ENCODE measurements at regions of chr19 and their contacts with region 1.

Region 1: GRCh38 chr19:31054430-31054829 is 294.8 kb downstream of the TSHZ3 start:
- DNase-seq: peak; percentile 62 to 70
- H3K4me3 ChIP-seq: no peak overlapping the region
- H3K27ac ChIP-seq: no peak overlapping the region
- H3K4me1 ChIP-seq: no peaks in the 10 kb centered on the region; a peak in 2 of 7 replicates
- H3K27me3 ChIP-seq: no peaks in the 10 kb centered on the region
- CTCF ChIP-seq: peak; percentile 84 to 98 (median 98)
- EP300 ChIP-seq: no peak
- POLR2A ChIP-seq: no peak
- RAD21 ChIP-seq: peak; percentile 98

Region 2: GRCh38 chr19:30682999-30683536 is 371.4 kb before region 1 on chr19:
- CTCF ChIA-PET with region 1: interaction called, 13 read pairs
- POLR2A ChIA-PET with region 1: no interaction called
- DNase-seq: peak in 1 of 2 experiments; percentile 82
- H3K4me3 ChIP-seq: no peak overlapping the region
- H3K27ac ChIP-seq: no peak overlapping the region
- H3K4me1 ChIP-seq: peaks cover 0 to 3% (median 0%) of the 10 kb centered on the region in 4 experiments; a peak in 2 of 7 replicates
- H3K27me3 ChIP-seq: no peaks in the 10 kb centered on the region
- CTCF ChIP-seq: peak; percentile 79 to 88 (median 86)
- EP300 ChIP-seq: no peak
- POLR2A ChIP-seq: no peak
- RAD21 ChIP-seq: peak; percentile 92 to 94

Region 3: GRCh38 chr19:31071136-31071855 is 16.9 kb after region 1 on chr19:
- CTCF ChIA-PET with region 1: interaction called, 14 read pairs
- POLR2A ChIA-PET with region 1: no interaction called
- DNase-seq: no peak
- H3K4me3 ChIP-seq: no peak overlapping the region
- H3K27ac ChIP-seq: no peak overlapping the region
- H3K4me1 ChIP-seq: peaks cover 3 to 15% (median 7%) of the 10 kb centered on the region in 4 experiments; a peak in 4 of 7 replicates
- H3K27me3 ChIP-seq: no peaks in the 10 kb centered on the region
- CTCF ChIP-seq: no peak
- EP300 ChIP-seq: no peak
- POLR2A ChIP-seq: no peak
- RAD21 ChIP-seq: no peak

Region 4: DNA sequence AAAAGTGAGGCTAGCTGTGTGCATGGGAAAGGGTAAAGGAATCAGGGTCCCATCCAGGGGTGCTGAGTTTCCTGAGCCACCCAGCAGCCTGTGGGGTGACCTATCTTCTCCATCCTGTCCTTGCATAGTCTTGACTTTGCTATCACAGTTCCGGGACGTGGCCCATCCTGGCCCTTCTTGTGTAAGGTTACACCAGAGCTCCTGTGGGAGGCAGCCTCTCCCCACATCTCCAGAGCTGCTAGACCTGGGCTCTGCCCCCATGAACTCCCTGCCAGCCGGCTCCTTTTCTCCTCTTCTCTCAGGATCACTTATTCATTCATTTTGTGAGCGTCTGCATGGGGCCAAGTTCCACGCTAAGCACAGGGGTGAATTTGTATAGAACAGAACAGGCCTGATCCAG is 55.9 kb after region 1 on chr19:
- CTCF ChIA-PET with region 1: interaction called, 12 read pairs
- POLR2A ChIA-PET with region 1: no interaction called
- DNase-seq: peak; percentile 9 to 48
- H3K4me3 ChIP-seq: no peak overlapping the region
- H3K27ac ChIP-seq: no peak overlapping the region
- H3K4me1 ChIP-seq: peaks cover 0 to 6% (median 2%) of the 10 kb centered on the region in 4 experiments; a peak in 2 of 7 replicates
- H3K27me3 ChIP-seq: no peaks in the 10 kb centered on the region
- CTCF ChIP-seq: peak; percentile 45 to 55 (median 54)
- EP300 ChIP-seq: no peak
- POLR2A ChIP-seq: no peak
- RAD21 ChIP-seq: peak; percentile 72 to 87

Region 5: DNA sequence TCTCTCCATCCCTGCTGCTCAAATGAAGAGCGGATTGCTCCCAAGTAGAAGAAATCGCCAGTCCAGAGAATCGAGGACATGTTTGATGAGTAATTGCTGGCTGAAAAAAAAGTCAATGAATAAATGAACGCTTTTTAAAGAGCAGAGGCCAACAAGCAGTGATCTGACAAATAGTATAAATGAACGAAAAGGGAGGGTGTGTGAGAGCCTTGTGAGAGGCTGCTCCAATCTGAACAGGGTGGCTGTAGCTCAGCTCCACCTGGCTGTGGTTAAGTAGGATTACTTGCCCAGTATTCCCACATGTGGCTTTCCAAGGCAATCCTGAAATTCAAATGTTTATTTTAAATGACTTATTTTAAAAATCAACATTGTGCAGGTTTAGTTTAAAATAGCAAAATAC is 177.8 kb after region 1 on chr19:
- CTCF ChIA-PET with region 1: interaction called, 11 read pairs
- POLR2A ChIA-PET with region 1: no interaction called
- DNase-seq: no peak
- H3K4me3 ChIP-seq: no peak overlapping the region
- H3K27ac ChIP-seq: no peak overlapping the region
- H3K4me1 ChIP-seq: peaks cover 0 to 6% (median 0%) of the 10 kb centered on the region in 4 experiments; a peak in 1 of 7 replicates
- H3K27me3 ChIP-seq: no peaks in the 10 kb centered on the region
- CTCF ChIP-seq: peak; percentile 29 to 41 (median 40); a peak in 3 of 4 replicates
- EP300 ChIP-seq: no peak
- POLR2A ChIP-seq: no peak
- RAD21 ChIP-seq: peak; percentile 45 to 59; a peak in 3 of 4 replicates

Region 6: GRCh38 chr19:31351069-31351854 is 296.8 kb after region 1 on chr19:
- CTCF ChIA-PET with region 1: interaction called, 19 read pairs
- POLR2A ChIA-PET with region 1: no interaction called
- DNase-seq: peak in 1 of 2 experiments; percentile 66
- H3K4me3 ChIP-seq: peak overlapping the region; percentile 57 to 82 (median 70)
- H3K27ac ChIP-seq: no peak overlapping the region
- H3K4me1 ChIP-seq: peaks cover 15 to 36% (median 23%) of the 10 kb centered on the region in 4 experiments
- H3K27me3 ChIP-seq: peaks cover 38 to 75% (median 61%) of the 10 kb centered on the region in 4 experiments; a peak in 6 of 7 replicates
- CTCF ChIP-seq: no peak
- EP300 ChIP-seq: no peak
- POLR2A ChIP-seq: no peak
- RAD21 ChIP-seq: no peak

Measured in H1 (cell line).